Heart right ventricle (tissue), 16 donors: ENCODE measurements at regions of chr5 and their contacts with region 1.

Region 1: GRCh38 chr5:108339232-108339631 is 42.7 kb downstream of the FBXL17 start:
- DNase-seq: no peak
- ATAC-seq: no peak
- H3K4me3 ChIP-seq: no peak overlapping the region
- H3K27ac ChIP-seq: no peak overlapping the region
- H3K4me1 ChIP-seq: peaks cover 0 to 25% (median 5%) of the 10 kb centered on the region in 9 donors
- H3K27me3 ChIP-seq: no peaks in the 10 kb centered on the region
- CTCF ChIP-seq: no peak

Region 2: DNA sequence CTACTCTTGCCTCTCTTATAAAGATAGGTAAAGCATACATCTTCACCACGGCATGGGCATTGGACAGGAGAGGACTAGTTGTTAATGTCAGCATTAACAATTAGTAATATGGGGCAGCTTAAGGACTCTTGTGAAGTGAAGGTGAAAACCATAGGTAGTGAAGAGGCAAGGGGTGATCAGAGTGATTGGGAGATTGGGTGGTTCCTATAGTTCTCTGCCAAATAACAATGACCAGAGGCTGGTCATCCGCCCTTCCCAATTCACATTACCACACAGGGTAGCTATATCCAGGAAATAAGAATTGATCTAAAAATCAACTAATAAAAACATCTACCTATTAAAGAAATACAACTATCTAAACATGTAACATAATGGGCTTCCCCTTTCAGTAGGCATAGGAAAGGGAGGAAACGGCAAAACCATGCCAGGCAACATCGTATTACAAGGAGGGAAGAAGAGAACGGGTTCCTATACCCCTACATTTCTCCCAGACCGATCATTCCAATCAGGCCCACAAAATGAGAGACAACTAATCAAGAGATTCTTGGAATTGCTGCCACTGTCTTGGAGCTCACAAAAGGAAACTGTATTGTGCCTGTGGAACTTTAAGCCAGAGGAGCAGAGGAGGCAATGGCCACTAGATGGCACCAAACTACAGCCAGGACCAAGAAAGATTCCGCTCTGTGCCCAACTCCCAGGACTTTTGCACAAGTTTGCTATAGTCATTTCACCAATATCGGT is 78.9 kb before region 1 on chr5:
- intact Hi-C with region 1: loop called in 6 of 10 experiments (anchors 2 to 10 kb)
- DNase-seq: peak; percentile 33 to 78
- ATAC-seq: peak; percentile 83 to 96 (median 94)
- H3K4me3 ChIP-seq: peak overlapping the region in 3 of 10 donors; percentile 13 to 29 (median 27)
- H3K27ac ChIP-seq: no peak overlapping the region
- H3K4me1 ChIP-seq: peaks cover 0 to 27% (median 18%) of the 10 kb centered on the region in 9 donors
- H3K27me3 ChIP-seq: no peaks in the 10 kb centered on the region
- CTCF ChIP-seq: peak; percentile 89 to 97 (median 94)

Region 3: DNA sequence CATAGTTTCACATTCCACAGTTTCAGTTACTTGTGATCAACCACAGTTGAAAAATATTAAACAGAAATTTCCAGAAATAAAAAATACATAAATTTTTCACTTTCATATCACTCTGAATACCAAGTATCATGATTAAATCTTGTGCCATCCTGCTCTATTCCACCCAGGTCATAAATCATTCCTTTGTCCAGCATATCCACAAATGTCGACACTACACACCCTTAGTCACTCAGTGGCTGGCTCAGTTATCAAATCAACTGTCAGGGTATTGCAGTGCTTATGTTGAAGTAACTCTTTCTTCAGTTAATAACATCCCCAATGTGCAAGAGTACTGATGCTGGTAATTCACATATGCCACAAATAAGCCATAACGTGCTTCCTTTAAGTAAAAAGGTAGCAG is 73.0 kb before region 1 on chr5:
- intact Hi-C with region 1: loop called in 5 of 10 experiments (anchors 2 to 5 kb)
- DNase-seq: no peak
- ATAC-seq: no peak
- H3K4me3 ChIP-seq: no peak overlapping the region
- H3K27ac ChIP-seq: no peak overlapping the region
- H3K4me1 ChIP-seq: peaks cover 0 to 5% (median 0%) of the 10 kb centered on the region in 9 donors
- H3K27me3 ChIP-seq: no peaks in the 10 kb centered on the region
- CTCF ChIP-seq: no peak

Region 4: DNA sequence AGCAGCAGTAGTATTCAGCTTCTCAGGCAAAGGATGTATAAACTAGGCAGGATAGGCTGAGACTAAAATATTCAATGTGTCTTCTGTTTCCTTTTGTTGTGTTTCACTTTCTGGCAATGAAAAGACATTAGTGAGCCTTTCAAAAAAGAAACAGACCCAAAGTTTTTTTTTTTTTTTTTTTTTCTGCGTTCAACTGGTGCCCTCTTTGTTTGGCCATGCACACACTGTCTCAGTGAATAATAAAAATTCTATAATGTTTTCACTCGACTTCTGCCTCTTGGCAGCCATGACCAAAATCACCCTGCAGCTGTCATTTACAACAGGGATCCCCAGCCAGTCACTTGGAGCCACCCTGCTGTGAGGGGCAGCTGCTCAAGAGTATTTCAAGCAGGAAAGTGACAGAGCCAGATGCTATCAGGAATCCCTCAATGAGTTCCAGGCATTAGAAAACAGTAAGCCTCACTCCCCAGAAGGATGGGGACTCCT is 1306.5 kb after region 1 on chr5:
- intact Hi-C with region 1: no loop called
- DNase-seq: no peak
- ATAC-seq: no peak
- H3K4me3 ChIP-seq: no peak overlapping the region
- H3K27ac ChIP-seq: no peak overlapping the region
- H3K4me1 ChIP-seq: no peaks in the 10 kb centered on the region
- H3K27me3 ChIP-seq: no peaks in the 10 kb centered on the region
- CTCF ChIP-seq: no peak